HEK293 (cell line): ENCODE measurements at regions of chr10 and their contacts with region 1.

Region 1: GRCh38 chr10:48656241-48656913 is 28.3 kb upstream of the WDFY4 start:
- H3K4me3 ChIP-seq: peak overlapping the region; percentile 50
- H3K27ac ChIP-seq: no peak overlapping the region; the same call in 1 of the 2 replicates
- H3K4me1 ChIP-seq: no peaks in the 10 kb centered on the region
- CTCF ChIP-seq: peak; percentile 68

Region 2: DNA sequence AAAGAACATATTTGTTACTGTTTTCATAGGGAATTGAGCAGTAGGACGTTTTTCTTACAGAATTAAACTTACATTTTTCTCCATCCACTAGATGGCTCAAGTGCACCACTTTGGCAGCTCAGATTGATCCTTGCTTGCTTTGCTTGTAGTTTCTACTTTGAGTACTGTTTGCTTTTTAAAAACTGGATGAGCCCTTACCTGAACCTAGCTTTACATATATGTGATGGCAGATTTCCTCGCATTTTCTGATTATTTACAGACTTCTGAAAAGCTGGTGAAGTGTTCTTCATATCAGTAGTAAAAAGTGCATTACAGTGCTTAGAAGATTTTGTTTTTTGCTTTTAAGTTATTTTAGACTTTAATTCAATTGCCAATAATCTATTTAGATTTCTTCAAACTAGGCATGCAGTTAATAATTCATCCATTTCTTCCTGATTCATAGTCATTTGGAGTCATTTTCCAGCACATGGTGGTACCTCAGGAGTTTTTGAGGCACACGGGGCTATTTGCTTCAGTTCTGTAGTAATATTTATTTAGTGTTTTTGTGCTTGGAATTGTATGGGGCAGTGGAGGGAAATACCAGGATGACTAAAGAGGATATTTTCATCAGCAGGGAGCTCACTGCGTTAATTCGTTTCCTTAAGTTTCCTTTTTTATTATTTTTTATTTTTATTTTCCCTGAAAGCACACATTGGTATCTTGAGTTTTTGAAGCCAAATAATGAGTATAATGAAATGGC is 292.6 kb before region 1 on chr10:
- CTCF ChIA-PET with region 1: interaction called, 85 read pairs
- POLR2A ChIA-PET with region 1: interaction called, 5 read pairs
- H3K4me3 ChIP-seq: no peak overlapping the region
- H3K27ac ChIP-seq: no peak overlapping the region
- H3K4me1 ChIP-seq: peaks cover 16% of the 10 kb centered on the region
- CTCF ChIP-seq: peak; percentile 63; the same call in 1 of the 2 replicates

Region 3: DNA sequence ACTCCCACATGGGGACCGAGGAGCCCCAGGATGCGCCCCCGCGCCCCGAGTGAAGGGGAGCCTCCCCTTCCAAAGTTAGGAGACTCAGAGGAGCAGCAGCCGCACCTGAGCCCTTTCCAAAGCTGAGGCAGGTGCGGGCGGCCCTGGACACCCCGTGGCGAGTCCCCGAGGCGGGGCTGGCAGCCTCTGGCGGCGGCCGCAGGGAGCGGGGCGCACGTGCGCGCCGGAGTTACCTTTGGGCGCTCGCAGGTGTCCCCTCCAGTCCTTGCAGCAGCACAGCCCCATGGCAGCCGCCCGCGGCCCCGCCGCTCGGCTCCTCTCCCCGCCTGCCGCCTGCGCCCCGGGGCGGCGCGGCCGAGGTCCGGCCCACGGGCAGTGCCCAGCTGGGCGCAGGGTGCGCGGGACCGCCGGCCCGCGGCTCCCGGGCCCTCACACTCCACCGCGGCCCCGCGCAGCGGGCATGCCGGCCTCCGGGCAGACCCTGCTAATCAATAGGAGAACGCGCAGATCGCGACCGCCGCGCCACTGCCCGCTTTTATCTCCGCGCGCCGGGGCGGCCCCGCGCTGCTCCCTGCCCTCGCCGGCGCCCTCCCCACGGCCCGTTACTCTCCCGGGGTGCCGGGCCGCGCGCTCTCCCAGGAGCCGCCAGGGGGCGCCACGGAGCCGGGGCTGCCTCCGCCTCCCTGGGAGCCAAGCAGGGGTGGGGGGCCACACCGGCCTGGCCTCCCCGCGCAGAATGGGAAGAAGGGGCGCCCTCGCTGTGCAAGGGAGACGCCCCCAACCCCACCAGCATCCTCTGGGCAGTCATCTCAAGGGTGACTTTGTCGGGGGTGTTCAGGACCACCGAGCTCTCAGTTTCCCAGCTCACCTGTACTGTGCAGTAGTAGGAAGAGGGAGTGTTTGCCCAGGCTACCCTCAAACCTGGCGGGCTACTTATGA is 132.3 kb before region 1 on chr10:
- CTCF ChIA-PET with region 1: interaction called, 16 read pairs
- POLR2A ChIA-PET with region 1: no interaction called
- H3K4me3 ChIP-seq: peak overlapping the region; percentile 51
- H3K27ac ChIP-seq: peak overlapping the region; percentile 54; the same call in 1 of the 2 replicates
- H3K4me1 ChIP-seq: no peaks in the 10 kb centered on the region
- CTCF ChIP-seq: peak; percentile 74

Region 4: DNA sequence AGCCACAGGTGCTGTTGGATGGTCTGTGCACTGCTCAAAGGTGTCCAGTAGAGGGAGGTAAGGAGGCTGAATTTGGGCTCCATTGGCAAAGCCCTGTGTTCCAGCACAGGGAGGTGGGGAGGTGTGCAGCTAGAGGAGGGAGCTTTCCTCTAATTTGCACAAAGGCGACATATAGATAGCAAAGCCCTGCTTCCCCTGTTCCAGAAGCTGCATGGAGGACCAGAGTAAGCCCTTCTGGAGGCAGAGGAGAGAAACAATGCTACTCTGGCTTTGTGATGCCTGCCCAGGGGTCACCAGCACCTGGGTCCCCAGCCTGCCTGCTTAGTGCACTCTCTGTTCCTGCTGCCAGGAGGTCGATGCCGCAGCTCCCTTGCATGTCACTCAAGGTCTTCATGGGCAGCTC is 48.1 kb before region 1 on chr10:
- CTCF ChIA-PET with region 1: interaction called, 42 read pairs
- POLR2A ChIA-PET with region 1: interaction called, 9 read pairs
- H3K4me3 ChIP-seq: no peak overlapping the region
- H3K27ac ChIP-seq: no peak overlapping the region
- H3K4me1 ChIP-seq: no peaks in the 10 kb centered on the region
- CTCF ChIP-seq: peak; percentile 40; the same call in 1 of the 2 replicates

Region 5: GRCh38 chr10:48710647-48711275 is 54.4 kb after region 1 on chr10:
- CTCF ChIA-PET with region 1: no interaction called
- POLR2A ChIA-PET with region 1: no interaction called
- H3K4me3 ChIP-seq: no peak overlapping the region
- H3K27ac ChIP-seq: no peak overlapping the region
- H3K4me1 ChIP-seq: no peaks in the 10 kb centered on the region
- CTCF ChIP-seq: no peak

Region 6: DNA sequence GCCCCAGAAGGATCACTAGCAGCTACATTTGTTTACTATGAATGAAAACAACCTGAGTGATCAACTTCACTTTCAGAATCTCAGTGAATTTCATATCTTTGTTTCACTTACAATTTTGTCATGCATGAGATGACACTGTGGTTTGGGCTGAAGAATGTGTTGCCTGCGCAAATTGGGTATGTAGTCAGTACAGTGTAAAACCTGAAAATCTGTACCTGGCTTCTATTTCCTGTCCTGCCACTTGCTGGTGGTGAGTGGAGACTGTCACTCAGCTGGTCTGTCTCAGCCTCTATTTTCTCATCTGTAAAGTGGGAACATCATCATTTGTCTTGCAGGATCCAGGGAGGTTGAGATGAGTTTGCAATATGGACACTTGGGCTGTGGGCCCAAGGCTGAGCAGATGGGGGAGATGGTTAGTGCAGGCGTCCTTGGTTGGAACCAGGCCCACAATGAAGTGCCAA is 146.3 kb after region 1 on chr10:
- CTCF ChIA-PET with region 1: interaction called, 18 read pairs
- POLR2A ChIA-PET with region 1: no interaction called
- H3K4me3 ChIP-seq: no peak overlapping the region
- H3K27ac ChIP-seq: no peak overlapping the region
- H3K4me1 ChIP-seq: no peaks in the 10 kb centered on the region; the same call in 1 of the 2 replicates
- CTCF ChIP-seq: no peak

Region 7: DNA sequence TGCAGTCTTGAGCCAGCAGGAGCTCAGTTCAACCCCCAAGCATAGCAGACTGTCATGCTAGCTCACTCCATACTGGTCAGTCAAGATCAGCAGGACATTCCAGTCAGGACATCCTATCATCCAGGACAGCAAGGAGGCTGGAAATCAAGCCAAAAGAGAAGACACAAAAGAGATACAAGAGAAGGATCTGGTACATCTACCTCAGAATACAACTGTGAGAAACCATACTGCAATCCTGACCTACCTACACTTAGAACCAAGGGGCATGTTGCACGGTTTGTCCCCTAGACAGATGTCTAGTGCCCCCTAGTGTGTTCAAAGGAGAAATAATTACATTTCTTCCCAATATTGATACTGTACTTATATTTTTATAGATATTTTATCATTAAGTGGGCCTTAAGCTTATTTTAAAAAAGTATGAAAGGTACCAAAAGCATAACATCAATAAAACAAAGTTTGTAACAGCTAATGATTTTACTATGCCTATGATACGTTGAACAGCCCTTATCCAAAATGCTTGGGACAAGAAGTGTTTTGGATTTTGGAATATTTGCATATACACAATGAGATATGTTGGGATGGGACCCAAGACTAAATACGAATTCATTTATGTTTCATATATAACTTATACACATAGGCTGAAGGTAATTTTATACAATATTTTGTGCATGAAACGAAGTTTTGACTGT is 855.9 kb after region 1 on chr10:
- CTCF ChIA-PET with region 1: interaction called, 10 read pairs
- POLR2A ChIA-PET with region 1: no interaction called
- H3K4me3 ChIP-seq: no peak overlapping the region
- H3K27ac ChIP-seq: no peak overlapping the region
- H3K4me1 ChIP-seq: no peaks in the 10 kb centered on the region
- CTCF ChIP-seq: 0 out of 2 replicates have a peak, but pooled peaks have one; percentile 9